ENCODE measurements at regions of chr1 and their contacts with region 1.

Region 1: DNA sequence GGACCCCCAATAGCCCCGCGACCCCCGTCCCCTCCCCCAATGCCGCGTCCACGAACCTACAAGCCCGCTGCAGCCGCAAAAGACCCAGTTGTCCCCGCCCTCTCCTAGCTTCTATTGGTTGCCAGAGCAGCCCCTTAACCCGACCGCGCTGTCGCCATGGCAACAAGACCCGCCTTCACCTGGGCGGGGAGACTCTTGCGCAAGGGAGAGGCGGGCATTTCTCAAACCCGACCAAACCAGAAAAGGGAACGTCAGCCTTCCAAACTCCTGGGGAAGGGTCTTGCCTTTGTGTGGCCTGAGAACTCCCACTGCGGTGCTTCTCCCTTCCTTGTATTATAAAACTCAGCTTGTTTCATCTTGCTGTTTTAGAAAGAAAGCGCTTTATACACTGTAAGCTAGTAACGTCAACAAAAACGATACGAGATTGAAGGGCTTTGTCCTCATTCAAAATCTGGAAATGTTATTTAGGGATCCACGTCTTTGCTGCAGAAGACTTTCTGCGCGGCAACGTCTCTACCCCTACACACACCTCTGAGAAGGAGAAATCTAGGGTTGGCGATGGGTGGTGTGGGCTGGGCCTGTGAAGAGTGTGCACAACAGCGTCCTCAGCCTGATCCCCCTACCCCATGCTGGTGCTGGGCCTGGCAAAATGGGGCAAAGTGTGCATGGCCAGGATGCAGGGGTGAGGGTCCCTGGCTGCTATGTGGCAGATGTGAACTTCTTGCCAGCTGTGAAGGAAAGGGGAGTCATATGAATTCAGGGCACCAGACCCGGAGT is at the start of gene TMEM9:
- DNase-seq: peak; percentile 97 to 100 (median 99)
- ATAC-seq: peak; percentile 97
- H3K4me3 ChIP-seq: peak within 1 kb of the TSS; percentile 71 to 78
- H3K4me3 Mint-ChIP-seq: peak within 1 kb of the TSS; percentile 85
- H3K27ac ChIP-seq: peak within 1 kb of the TSS; percentile 50 to 51
- H3K27ac Mint-ChIP-seq: peak within 1 kb of the TSS; percentile 78
- H3K4me1 ChIP-seq: peaks cover 16% of the 10 kb centered on the region
- H3K4me1 Mint-ChIP-seq: peaks cover 26% of the 10 kb centered on the region
- H3K27me3 ChIP-seq: no peaks in the 10 kb centered on the region
- H3K27me3 Mint-ChIP-seq: no peaks in the 10 kb centered on the region
- CTCF ChIP-seq: no peak
- total RNA-seq, gene TMEM9: 14.3 to 14.4 TPM

Region 2: DNA sequence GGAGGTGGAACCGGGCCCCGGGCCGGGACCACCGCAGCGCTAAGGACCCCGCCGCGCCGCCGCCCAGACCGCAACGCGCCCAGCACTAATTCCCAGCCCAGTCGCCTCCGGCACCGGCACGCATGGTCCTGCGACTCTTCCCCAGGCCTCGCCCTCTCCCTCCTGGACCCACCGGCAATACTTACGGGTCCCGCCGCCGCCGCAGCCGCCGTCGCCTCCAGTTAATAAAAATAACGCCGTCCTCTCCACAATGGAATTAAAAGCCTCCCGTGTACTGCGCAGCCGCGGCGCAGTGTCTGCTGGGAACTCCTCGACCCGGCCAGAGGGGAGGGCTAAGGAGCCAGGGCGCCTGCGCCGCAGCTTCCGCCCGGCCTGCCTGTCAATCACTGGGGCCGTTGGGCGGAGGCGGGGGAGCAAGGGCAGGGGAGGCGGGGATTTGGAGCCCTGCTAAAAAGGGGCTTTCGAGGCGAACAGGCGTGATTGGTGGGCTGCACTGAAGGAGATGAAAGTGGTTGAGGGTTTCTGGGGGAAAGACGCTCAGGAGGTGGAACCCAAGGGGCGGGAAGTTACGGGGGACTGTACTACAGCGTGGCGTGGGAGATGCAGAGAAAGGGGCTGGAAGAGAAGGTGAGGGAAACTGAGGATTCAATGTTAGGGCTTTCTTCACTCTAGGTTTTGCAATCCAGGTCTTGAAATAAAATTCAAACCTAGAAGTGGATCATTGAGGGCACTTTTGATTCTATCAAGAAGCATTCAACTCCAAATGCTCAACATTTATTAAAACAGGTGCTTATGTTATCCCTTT is 744.6 kb before region 1 on chr1 and contains the start of gene ZNF281:
- CTCF ChIA-PET with region 1: no interaction called
- POLR2A ChIA-PET with region 1: no interaction called
- intact Hi-C with region 1: loop called in 1 of 2 experiments (anchors 5 kb)
- DNase-seq: peak; percentile 91 to 98 (median 95)
- ATAC-seq: peak; percentile 95
- H3K4me3 ChIP-seq: peak within 1 kb of the TSS; percentile 78 to 95
- H3K4me3 Mint-ChIP-seq: peak within 1 kb of the TSS; percentile 99
- H3K27ac ChIP-seq: peak within 1 kb of the TSS; percentile 71 to 76
- H3K27ac Mint-ChIP-seq: peak within 1 kb of the TSS; percentile 98
- H3K4me1 ChIP-seq: peaks cover 47% of the 10 kb centered on the region
- H3K4me1 Mint-ChIP-seq: peaks cover 52% of the 10 kb centered on the region
- H3K27me3 ChIP-seq: no peaks in the 10 kb centered on the region
- H3K27me3 Mint-ChIP-seq: no peaks in the 10 kb centered on the region
- CTCF ChIP-seq: no peak
- total RNA-seq, gene ZNF281: 31.0 to 32.9 TPM

Region 3: GRCh38 chr1:200738740-200739498 is 415.7 kb before region 1 on chr1 and contains the start of gene CAMSAP2:
- CTCF ChIA-PET with region 1: no interaction called
- POLR2A ChIA-PET with region 1: no interaction called
- intact Hi-C with region 1: loop called in 1 of 2 experiments (anchors 2 kb)
- DNase-seq: peak; percentile 16 to 78 (median 63)
- ATAC-seq: peak; percentile 68
- H3K4me3 ChIP-seq: peak within 1 kb of the TSS; percentile 82 to 84
- H3K4me3 Mint-ChIP-seq: peak within 1 kb of the TSS; percentile 93
- H3K27ac ChIP-seq: peak within 1 kb of the TSS; percentile 28 to 41
- H3K27ac Mint-ChIP-seq: peak within 1 kb of the TSS; percentile 84
- H3K4me1 ChIP-seq: peaks cover 25% of the 10 kb centered on the region
- H3K4me1 Mint-ChIP-seq: peaks cover 31% of the 10 kb centered on the region
- H3K27me3 ChIP-seq: peaks cover 0 to 4% of the 10 kb centered on the region in 2 experiments
- H3K27me3 Mint-ChIP-seq: no peaks in the 10 kb centered on the region
- CTCF ChIP-seq: no peak
- total RNA-seq, gene CAMSAP2: 1.7 to 2.2 TPM

Region 4: GRCh38 chr1:201114236-201115131 is 40.1 kb before region 1 on chr1:
- CTCF ChIA-PET with region 1: interaction called, 3 read pairs
- POLR2A ChIA-PET with region 1: interaction called, 8 read pairs
- intact Hi-C with region 1: loop called (anchors 1 to 5 kb)
- DNase-seq: peak; percentile 47 to 85 (median 71)
- ATAC-seq: peak; percentile 80
- H3K4me3 ChIP-seq: peak overlapping the region; percentile 67 to 87
- H3K4me3 Mint-ChIP-seq: peak overlapping the region; percentile 91
- H3K27ac ChIP-seq: peak overlapping the region; percentile 40 to 51
- H3K27ac Mint-ChIP-seq: peak overlapping the region; percentile 90
- H3K4me1 ChIP-seq: peaks cover 13% of the 10 kb centered on the region
- H3K4me1 Mint-ChIP-seq: peaks cover 29% of the 10 kb centered on the region
- H3K27me3 ChIP-seq: no peaks in the 10 kb centered on the region
- H3K27me3 Mint-ChIP-seq: no peaks in the 10 kb centered on the region
- CTCF ChIP-seq: peak; percentile 72

Region 5: DNA sequence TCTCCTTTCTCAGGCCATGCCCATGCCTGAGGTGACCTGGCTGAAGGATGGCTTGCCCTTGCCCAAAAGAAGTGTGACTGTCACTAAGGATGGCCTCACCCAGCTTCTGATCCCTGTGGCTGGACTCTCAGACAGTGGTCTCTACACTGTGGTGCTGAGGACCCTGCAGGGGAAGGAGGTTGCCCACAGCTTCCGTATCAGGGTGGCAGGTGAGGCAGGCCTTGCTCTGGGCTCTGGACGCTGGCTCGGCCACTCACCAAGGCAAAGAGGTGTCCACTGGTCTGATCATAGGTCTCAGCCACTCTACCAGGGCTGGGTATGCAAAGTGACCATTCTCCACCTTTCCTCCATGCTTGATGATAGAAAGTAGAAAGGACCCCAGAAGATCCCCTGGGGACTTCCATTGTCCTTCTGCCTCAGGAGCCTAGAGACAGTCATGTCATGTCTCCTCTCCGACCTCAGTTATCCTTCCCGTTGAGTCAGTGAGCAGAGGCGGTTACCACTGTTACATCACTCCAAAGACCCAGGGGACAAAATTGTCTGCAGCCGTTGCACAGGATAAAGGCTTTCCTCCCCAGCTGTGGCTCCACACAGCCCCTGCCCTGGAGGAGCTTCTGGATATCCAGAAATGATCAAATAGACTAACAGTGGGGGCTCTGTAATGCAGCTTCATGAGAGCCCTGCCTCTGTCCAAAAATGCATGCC is 70.2 kb after region 1 on chr1:
- CTCF ChIA-PET with region 1: interaction called, 3 read pairs
- POLR2A ChIA-PET with region 1: no interaction called
- intact Hi-C with region 1: loop called in 1 of 2 experiments (anchors 2 kb)
- DNase-seq: peak in 1 of 9 experiments; percentile 29
- ATAC-seq: no peak
- H3K4me3 ChIP-seq: no peak overlapping the region
- H3K4me3 Mint-ChIP-seq: no peak overlapping the region
- H3K27ac ChIP-seq: no peak overlapping the region
- H3K27ac Mint-ChIP-seq: no peak overlapping the region
- H3K4me1 ChIP-seq: no peaks in the 10 kb centered on the region
- H3K4me1 Mint-ChIP-seq: no peaks in the 10 kb centered on the region
- H3K27me3 ChIP-seq: no peaks in the 10 kb centered on the region
- H3K27me3 Mint-ChIP-seq: peaks cover 7% of the 10 kb centered on the region
- CTCF ChIP-seq: no peak

Region 6: DNA sequence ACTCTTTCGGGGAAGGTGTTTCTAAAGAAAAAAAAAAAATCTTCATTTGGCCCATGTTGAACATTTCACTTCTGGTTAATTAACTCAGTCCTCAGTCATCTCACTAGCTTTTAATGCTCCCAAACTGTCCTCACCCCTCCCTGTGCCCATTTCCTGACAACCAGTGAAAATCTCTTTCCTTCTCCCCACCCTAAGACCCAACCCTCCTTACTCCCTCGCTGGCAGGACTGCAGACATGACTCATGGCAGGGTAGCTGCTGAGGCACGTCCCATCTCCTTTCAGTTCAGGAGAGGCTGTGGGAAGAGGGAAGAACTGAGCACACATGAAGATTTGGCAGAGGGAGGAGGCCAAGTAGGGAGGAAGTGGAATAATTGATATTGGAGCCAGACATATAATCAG is 141.3 kb after region 1 on chr1:
- CTCF ChIA-PET with region 1: no interaction called
- POLR2A ChIA-PET with region 1: no interaction called
- intact Hi-C with region 1: no loop called
- DNase-seq: no peak
- ATAC-seq: no peak
- H3K4me3 ChIP-seq: no peak overlapping the region
- H3K4me3 Mint-ChIP-seq: no peak overlapping the region
- H3K27ac ChIP-seq: no peak overlapping the region
- H3K27ac Mint-ChIP-seq: no peak overlapping the region
- H3K4me1 ChIP-seq: no peaks in the 10 kb centered on the region
- H3K4me1 Mint-ChIP-seq: no peaks in the 10 kb centered on the region
- H3K27me3 ChIP-seq: peaks cover 0 to 3% of the 10 kb centered on the region in 2 experiments
- H3K27me3 Mint-ChIP-seq: peaks cover 12% of the 10 kb centered on the region
- CTCF ChIP-seq: no peak

Region 7: GRCh38 chr1:202376247-202376646 is 1221.7 kb after region 1 on chr1:
- CTCF ChIA-PET with region 1: no interaction called
- POLR2A ChIA-PET with region 1: no interaction called
- intact Hi-C with region 1: no loop called
- DNase-seq: no peak
- ATAC-seq: no peak
- H3K4me3 ChIP-seq: no peak overlapping the region
- H3K4me3 Mint-ChIP-seq: no peak overlapping the region
- H3K27ac ChIP-seq: no peak overlapping the region
- H3K27ac Mint-ChIP-seq: no peak overlapping the region
- H3K4me1 ChIP-seq: no peaks in the 10 kb centered on the region
- H3K4me1 Mint-ChIP-seq: peaks cover 28% of the 10 kb centered on the region
- H3K27me3 ChIP-seq: no peaks in the 10 kb centered on the region
- H3K27me3 Mint-ChIP-seq: no peaks in the 10 kb centered on the region
- CTCF ChIP-seq: no peak